ENCODE measurements at regions of chr12 and their contacts with region 1.

Region 1: GRCh38 chr12:26523708-26524150 is 309.3 kb downstream of the ITPR2 start:
- DNase-seq: peak; percentile 85 to 94 (median 91)
- H3K4me3 ChIP-seq: no peak overlapping the region
- H3K4me3 Mint-ChIP-seq: peak overlapping the region in 1 of 2 donors; percentile 54
- H3K27ac ChIP-seq: peak overlapping the region in 1 of 2 donors; percentile 47
- H3K27ac Mint-ChIP-seq: peak overlapping the region in 6 of 7 donors; percentile 10 to 84 (median 62)
- H3K4me1 ChIP-seq: peaks cover 5 to 12% of the 10 kb centered on the region in 2 donors
- H3K4me1 Mint-ChIP-seq: peaks cover 19% of the 10 kb centered on the region
- H3K27me3 ChIP-seq: no peaks in the 10 kb centered on the region
- H3K27me3 Mint-ChIP-seq: no peaks in the 10 kb centered on the region
- CTCF ChIP-seq: no peak

Region 2: GRCh38 chr12:26097046-26097878 is 426.5 kb before region 1 on chr12:
- intact Hi-C with region 1: loop called in 1 of 2 experiments (anchors 5 kb)
- DNase-seq: peak; percentile 58 to 76 (median 70)
- H3K4me3 ChIP-seq: no peak overlapping the region
- H3K4me3 Mint-ChIP-seq: no peak overlapping the region
- H3K27ac ChIP-seq: no peak overlapping the region
- H3K27ac Mint-ChIP-seq: no peak overlapping the region
- H3K4me1 ChIP-seq: peaks cover 0 to 8% of the 10 kb centered on the region in 2 donors
- H3K4me1 Mint-ChIP-seq: peaks cover 5% of the 10 kb centered on the region
- H3K27me3 ChIP-seq: no peaks in the 10 kb centered on the region
- H3K27me3 Mint-ChIP-seq: peaks cover 0 to 1% (median 0%) of the 10 kb centered on the region in 3 donors
- CTCF ChIP-seq: peak; percentile 97

Region 3: DNA sequence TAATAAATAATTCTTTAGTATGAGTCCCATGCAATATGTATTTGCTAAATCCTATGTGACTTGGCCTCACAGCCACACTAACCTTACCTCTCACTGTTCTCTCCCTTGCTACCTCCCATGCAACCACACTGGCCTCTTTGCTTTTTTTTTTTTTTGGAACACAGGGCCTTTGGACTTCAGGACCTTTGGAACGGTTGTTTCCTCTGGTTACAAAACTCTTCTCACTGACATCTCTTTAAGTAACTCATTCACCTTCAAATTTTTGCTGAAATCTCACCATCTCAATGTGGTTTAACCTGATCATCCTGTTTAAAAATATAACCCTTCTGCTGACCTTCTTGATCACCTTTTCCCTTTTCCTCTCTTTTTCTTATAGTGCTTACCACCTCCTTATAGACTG is 134.4 kb before region 1 on chr12:
- intact Hi-C with region 1: no loop called
- DNase-seq: no peak
- H3K4me3 ChIP-seq: no peak overlapping the region
- H3K4me3 Mint-ChIP-seq: no peak overlapping the region
- H3K27ac ChIP-seq: no peak overlapping the region
- H3K27ac Mint-ChIP-seq: no peak overlapping the region
- H3K4me1 ChIP-seq: no peaks in the 10 kb centered on the region
- H3K4me1 Mint-ChIP-seq: no peaks in the 10 kb centered on the region
- H3K27me3 ChIP-seq: no peaks in the 10 kb centered on the region
- H3K27me3 Mint-ChIP-seq: peaks cover 0 to 4% (median 0%) of the 10 kb centered on the region in 3 donors
- CTCF ChIP-seq: no peak

Region 4: GRCh38 chr12:26434299-26435068 is 89.2 kb before region 1 on chr12:
- intact Hi-C with region 1: loop called in 1 of 2 experiments (anchors 5 kb)
- DNase-seq: peak; percentile 31 to 49 (median 47)
- H3K4me3 ChIP-seq: no peak overlapping the region
- H3K4me3 Mint-ChIP-seq: no peak overlapping the region
- H3K27ac ChIP-seq: no peak overlapping the region
- H3K27ac Mint-ChIP-seq: no peak overlapping the region
- H3K4me1 ChIP-seq: no peaks in the 10 kb centered on the region
- H3K4me1 Mint-ChIP-seq: no peaks in the 10 kb centered on the region
- H3K27me3 ChIP-seq: no peaks in the 10 kb centered on the region
- H3K27me3 Mint-ChIP-seq: no peaks in the 10 kb centered on the region
- CTCF ChIP-seq: peak; percentile 86